ENCODE measurements at regions of chr17 and their contacts with region 1.

Region 1: DNA sequence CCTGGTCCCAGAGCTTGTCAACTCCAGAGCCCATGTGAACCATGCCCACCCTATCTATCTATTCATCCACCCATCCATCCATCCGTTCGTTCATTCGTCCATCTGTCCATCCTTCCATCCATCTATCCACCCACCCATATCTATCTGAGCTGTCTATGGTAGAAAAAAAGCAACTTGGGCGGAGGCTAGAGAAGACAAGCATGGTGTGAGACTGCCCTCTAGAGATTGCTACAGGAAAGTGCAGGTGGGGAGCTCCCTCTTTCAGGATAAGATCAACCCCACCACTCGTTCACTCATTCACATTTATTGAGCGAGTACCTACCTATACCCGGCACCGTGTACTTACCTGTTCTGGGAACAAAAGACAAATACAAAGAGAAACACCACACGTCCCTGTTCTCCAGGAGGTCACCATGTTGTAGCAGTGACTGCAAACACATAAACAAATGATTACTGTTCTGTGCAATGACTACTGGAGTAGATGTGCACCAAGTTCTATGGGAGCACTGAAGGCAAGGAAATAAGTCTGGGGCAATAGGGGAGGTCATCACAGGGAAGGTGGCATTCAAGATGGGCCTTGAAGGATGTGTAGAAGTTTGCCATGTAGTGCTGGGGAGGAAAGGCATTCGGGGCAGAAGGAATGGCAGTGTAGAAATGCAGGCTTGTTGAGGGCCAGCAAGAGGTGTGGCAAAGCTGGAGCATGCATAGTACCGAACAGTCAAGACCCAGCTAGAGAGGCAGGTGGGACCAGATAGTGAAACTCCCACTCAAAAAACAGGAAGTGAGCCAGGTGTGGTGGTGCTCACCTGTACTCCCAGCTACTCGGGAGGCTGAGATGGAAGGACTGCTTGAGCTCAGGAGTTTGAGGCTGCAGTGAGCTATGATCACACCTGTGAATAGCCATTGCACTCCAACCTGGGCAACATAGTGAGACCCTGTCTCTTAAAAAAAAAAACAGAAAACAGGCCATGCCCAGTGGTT is 13.4 kb upstream of the ATP5MC1 start:
- DNase-seq: no peak
- ATAC-seq: peak; percentile 92
- H3K4me3 ChIP-seq: no peak overlapping the region
- H3K27ac ChIP-seq: no peak overlapping the region
- H3K4me1 ChIP-seq: no peaks in the 10 kb centered on the region
- H3K27me3 ChIP-seq: no peaks in the 10 kb centered on the region
- CTCF ChIP-seq: peak; percentile 96

Region 2: DNA sequence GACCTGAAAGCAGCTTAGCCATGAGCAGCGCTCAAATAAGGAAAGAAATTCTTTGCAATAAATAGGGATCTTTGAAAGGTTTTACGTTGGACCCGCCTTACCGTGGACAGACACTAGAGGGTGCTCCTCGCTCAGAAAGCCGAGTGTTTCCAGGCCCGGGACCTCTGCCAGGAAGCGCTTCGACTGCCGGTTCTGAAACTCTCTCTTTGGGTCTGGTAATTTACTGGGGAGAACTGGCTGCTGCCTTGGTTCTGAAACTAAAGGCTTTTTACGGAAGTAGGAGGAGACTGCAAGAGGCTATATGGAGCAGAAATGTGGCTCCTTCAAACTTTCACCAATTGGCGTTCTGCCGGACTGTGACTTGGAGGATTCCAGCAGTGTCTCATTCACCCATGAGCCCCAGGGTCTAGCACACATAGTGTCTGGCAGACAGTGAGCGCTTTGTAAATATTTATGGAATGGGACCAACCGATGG is 207.5 kb before region 1 on chr17:
- intact Hi-C with region 1: loop called (anchors 5 kb)
- DNase-seq: peak; percentile 85
- ATAC-seq: peak; percentile 95
- H3K4me3 ChIP-seq: peak overlapping the region; percentile 34
- H3K27ac ChIP-seq: no peak overlapping the region
- H3K4me1 ChIP-seq: peaks cover 11% of the 10 kb centered on the region
- H3K27me3 ChIP-seq: peaks cover 35% of the 10 kb centered on the region
- CTCF ChIP-seq: peak; percentile 91

Region 3: DNA sequence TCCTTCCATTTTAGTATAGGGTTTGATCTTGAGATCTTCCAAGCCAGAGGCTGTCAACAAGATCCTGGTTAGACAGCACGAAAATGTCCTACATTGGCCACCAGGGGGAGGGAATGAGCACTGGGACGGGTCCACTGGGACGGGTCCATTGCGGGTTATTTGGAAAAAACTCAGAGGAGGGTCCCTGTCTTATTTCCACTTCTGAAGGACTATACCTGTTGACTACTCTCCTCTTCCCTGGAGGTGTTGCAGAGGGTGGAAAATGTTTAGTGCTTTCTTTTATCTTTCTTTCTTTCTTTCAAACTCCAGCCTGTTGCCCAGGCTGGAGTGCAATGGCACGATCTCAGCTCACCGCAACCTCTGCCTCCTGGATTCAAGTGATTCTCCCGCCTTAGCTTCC is 64.7 kb before region 1 on chr17:
- intact Hi-C with region 1: loop called (anchors 5 kb)
- DNase-seq: peak; percentile 52
- ATAC-seq: peak; percentile 22
- H3K4me3 ChIP-seq: no peak overlapping the region
- H3K27ac ChIP-seq: no peak overlapping the region
- H3K4me1 ChIP-seq: peaks cover 22% of the 10 kb centered on the region
- H3K27me3 ChIP-seq: peaks cover 3% of the 10 kb centered on the region
- CTCF ChIP-seq: peak; percentile 82

Region 4: DNA sequence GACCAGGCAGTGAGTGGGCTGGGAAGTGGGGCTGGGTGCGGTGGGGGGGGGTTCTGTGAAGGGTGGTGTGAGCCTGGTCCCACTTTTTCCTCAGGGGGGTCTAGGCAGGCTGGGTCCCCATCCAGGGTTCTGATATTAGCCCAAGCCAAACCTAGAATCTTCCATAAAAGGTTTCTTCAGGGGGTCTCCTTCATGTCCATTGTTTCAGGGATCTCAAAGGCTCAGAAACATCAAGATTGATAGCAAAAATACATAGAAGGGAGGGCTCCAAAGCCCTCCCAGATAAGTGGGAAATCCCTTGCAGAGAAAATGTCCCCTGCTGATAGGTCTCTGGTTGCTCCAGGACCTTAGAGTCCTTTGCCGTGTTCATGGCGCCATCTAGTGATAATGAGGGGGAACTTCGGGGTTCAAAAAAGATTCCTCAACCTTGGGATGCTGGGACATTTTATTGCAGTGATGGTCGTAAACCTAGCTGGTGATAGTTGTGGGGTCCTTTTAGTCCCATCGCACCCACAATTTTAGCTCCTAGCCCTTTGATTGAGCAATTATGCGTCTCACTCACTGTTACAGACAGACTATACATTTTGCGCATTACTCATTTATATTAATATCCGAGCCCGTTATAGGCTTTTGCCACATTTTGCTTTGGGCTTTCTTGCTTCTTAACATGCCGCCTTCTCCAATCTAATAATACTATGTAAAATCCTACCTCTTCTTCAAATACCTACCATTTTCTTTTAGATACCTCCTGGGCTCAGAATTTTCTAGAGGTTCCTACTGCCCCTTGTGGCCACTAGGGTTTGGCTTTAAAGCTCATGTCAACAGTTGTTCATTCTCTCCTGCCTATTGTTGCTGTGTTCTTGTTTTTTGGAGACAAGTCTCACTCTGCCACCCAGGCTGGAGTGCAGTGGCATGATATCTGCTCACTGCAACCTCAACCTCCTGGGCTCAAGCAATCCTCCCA is 153.0 kb after region 1 on chr17:
- intact Hi-C with region 1: loop called (anchors 10 kb)
- DNase-seq: no peak
- ATAC-seq: peak; percentile 88
- H3K4me3 ChIP-seq: no peak overlapping the region
- H3K27ac ChIP-seq: no peak overlapping the region
- H3K4me1 ChIP-seq: no peaks in the 10 kb centered on the region
- H3K27me3 ChIP-seq: peaks cover 3% of the 10 kb centered on the region
- CTCF ChIP-seq: peak; percentile 68

Measured in upper lobe of right lung (tissue), 1 donor.